Activated CD4-positive, alpha-beta memory T cell treated with anti-CD3 and anti-CD28 coated beads for 36 hours (primary cell): ENCODE measurements at regions of chr2 and their contacts with region 1.

Region 1: DNA sequence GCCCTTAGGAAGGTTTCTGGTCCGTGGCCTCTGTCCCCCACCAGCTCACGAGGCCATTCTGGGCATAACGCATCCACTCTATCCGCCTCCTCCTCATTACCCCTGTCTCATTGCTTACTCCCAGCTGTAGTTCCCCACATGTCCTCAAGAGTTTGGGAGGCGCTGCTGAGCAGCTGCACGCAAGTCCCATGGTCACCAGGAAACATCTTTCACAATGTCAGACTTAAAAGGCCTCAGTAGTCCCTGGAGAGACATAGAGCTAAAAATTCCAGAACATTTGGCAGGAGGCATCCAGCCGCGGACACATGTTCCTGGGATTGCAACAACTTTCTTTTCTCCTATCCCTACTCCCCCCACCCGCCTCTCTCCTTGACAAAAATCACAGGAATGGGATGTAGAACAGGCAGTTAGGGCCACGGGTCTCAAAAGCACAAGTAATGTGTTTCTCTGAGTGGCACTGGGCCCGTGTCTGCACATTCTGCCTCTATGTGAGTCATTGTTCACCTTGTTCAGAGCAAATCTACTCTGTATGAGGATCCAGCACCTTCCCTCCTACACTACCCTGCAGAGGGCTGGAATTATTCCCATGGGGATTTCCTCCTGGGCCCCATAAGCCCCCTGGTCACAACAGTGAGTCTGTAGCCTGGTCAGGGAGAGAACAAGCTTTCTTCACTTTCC is 8.1 kb downstream of the LBH start:
- DNase-seq: peak; percentile 87
- H3K4me3 Mint-ChIP-seq: peak overlapping the region; percentile 54
- H3K27ac Mint-ChIP-seq: peak overlapping the region; percentile 86
- H3K4me1 Mint-ChIP-seq: peaks cover 93% of the 10 kb centered on the region
- H3K27me3 Mint-ChIP-seq: no peaks in the 10 kb centered on the region

Region 2: DNA sequence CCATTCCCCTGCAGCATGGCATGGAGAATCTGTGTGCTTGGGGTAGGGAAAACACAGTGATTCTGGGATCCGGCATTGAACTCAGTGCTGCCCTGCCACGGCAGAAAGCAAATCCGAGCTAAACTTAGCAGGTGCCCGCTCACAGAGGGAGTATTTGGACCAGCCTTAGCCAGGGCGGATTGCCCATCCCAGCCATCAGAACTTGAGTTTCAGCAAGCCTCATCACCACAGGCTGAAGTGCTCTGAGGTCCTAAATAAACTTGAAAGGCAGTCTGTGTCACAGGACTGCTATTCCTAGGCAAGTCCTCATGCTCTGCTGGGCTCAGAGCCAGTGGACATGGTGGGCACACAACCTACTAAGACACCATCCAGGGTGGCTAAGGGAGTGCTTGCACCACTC is 178.9 kb before region 1 on chr2:
- CTCF ChIA-PET with region 1: no interaction called
- POLR2A ChIA-PET with region 1: no interaction called
- intact Hi-C with region 1: no loop called
- DNase-seq: no peak
- H3K4me3 Mint-ChIP-seq: no peak overlapping the region
- H3K27ac Mint-ChIP-seq: no peak overlapping the region
- H3K4me1 Mint-ChIP-seq: no peaks in the 10 kb centered on the region
- H3K27me3 Mint-ChIP-seq: peaks cover 18% of the 10 kb centered on the region

Region 3: DNA sequence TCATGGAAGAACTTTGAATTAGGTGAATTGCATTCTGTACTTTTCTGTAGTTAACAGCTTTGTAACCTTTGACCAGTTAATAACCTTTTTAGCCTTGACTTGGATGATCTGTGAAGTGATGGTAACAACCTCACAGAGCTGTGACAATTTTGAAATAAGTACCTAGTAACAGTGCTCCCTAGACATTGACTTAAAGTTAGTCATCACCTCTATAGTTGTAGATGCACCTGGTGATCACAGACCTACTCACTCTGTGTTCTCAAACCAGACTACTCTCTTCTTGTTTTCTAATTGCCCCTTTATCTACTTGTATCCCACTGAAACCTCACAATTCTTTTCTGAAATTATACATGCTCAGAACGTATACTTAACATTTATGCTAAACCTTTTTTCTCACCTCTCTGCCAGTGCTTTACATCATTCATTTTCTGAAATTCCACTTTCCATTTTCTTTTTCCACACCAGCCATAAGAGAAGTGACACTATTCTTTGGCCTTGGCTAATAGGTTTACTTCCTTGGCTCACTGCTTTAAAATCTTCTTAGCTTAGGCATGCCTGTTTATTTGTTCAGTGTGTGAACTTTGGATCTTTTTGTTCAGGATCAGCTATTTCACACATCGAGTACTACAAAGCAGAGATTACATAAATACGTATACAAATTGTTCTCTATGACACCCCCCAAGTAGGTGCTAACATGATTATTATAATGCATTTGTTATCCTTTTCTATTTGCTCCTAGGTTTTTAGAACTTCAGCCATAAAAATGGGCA is 83.4 kb before region 1 on chr2:
- CTCF ChIA-PET with region 1: no interaction called
- POLR2A ChIA-PET with region 1: no interaction called
- intact Hi-C with region 1: no loop called
- DNase-seq: no peak
- H3K4me3 Mint-ChIP-seq: no peak overlapping the region
- H3K27ac Mint-ChIP-seq: peak overlapping the region; percentile 59
- H3K4me1 Mint-ChIP-seq: peaks cover 51% of the 10 kb centered on the region
- H3K27me3 Mint-ChIP-seq: no peaks in the 10 kb centered on the region

Region 4: GRCh38 chr2:30225131-30225762 is 14.2 kb before region 1 on chr2:
- CTCF ChIA-PET with region 1: interaction called, 79 read pairs
- POLR2A ChIA-PET with region 1: interaction called, 33 read pairs
- intact Hi-C with region 1: loop called (anchors 1 kb)
- DNase-seq: peak; percentile 62
- H3K4me3 Mint-ChIP-seq: peak overlapping the region; percentile 83
- H3K27ac Mint-ChIP-seq: peak overlapping the region; percentile 97
- H3K4me1 Mint-ChIP-seq: peaks cover 70% of the 10 kb centered on the region
- H3K27me3 Mint-ChIP-seq: no peaks in the 10 kb centered on the region

Region 5: DNA sequence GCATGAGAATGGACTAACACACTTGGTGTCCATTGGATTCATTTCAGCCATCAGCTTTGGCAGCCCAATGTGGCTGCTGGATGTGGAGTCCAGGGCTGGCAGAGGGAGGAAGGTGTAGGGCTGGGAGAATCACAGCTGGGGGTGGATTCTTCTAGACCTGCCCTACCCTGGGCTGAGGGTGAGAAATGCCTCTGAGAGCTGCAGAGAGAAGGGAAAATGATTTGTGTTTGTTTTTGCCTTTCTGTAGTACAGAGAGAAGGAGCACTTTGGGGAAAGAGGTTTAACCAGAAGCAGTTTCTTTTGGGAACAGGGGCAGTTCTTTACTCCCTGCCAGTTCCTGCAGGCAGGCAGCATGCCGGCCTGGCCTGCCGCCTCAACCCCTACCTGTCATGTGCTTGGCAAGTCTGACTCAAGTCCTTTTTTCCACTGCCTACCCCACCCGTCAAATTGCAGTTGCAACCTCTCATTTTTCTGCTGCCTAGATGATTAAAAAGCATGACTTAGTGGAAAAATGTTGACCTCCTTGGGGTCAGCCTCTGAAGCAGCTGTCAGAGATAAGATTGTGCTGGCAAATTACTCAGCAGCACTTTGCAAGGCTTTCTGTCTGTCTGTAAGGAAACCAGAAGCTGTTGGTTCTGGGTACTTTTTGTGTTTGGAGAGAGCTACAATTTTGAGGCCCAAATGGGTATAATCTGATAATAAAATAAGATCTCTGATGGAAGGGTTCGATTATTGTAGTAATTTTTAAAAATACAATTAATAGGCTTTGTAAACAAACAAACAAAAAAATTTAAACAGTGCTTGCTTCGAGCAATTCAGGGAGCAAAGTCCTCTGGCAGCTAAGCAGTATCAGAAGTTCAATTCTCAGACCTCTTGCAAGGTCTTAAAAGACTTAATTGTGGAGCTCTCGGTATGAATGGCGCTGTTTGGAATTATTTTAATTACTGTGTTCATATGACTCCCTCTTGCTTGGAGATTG is 13.6 kb after region 1 on chr2:
- CTCF ChIA-PET with region 1: interaction called, 103 read pairs
- POLR2A ChIA-PET with region 1: interaction called, 19 read pairs
- intact Hi-C with region 1: loop called (anchors 1 kb)
- DNase-seq: peak; percentile 89
- H3K4me3 Mint-ChIP-seq: peak overlapping the region; percentile 33
- H3K27ac Mint-ChIP-seq: peak overlapping the region; percentile 92
- H3K4me1 Mint-ChIP-seq: peaks cover 96% of the 10 kb centered on the region
- H3K27me3 Mint-ChIP-seq: no peaks in the 10 kb centered on the region

Region 6: DNA sequence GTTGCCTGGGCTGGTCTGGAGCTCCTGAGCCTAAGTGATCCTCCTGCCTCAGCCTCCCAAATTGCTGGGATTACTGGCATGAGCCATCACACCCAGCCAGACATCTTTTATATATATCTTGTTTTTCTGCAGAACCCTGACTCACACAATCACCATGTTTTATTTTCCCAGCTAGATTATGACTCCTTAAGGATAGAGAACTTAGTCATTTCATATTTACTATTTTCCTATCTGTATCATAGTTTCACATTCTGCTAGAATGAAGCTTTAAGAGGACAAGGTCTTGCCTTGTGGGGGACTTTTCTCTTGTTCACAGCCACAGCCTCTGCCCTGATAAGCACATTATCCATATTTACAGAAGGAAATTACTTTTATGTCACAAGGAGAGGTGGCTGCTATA is 65.8 kb after region 1 on chr2:
- CTCF ChIA-PET with region 1: interaction called, 10 read pairs
- POLR2A ChIA-PET with region 1: interaction called, 3 read pairs
- intact Hi-C with region 1: no loop called
- DNase-seq: peak; percentile 23
- H3K4me3 Mint-ChIP-seq: no peak overlapping the region
- H3K27ac Mint-ChIP-seq: peak overlapping the region; percentile 73
- H3K4me1 Mint-ChIP-seq: peaks cover 24% of the 10 kb centered on the region
- H3K27me3 Mint-ChIP-seq: no peaks in the 10 kb centered on the region

Region 7: GRCh38 chr2:30447149-30448045 is 207.9 kb after region 1 on chr2 and contains the start of gene LCLAT1:
- CTCF ChIA-PET with region 1: interaction called, 4 read pairs
- POLR2A ChIA-PET with region 1: interaction called, 10 read pairs
- intact Hi-C with region 1: loop called (anchors 2 kb)
- DNase-seq: peak; percentile 90
- H3K4me3 Mint-ChIP-seq: peak within 1 kb of the TSS; percentile 88
- H3K27ac Mint-ChIP-seq: peak within 1 kb of the TSS; percentile 95
- H3K4me1 Mint-ChIP-seq: peaks cover 24% of the 10 kb centered on the region
- H3K27me3 Mint-ChIP-seq: no peaks in the 10 kb centered on the region
- total RNA-seq, gene LCLAT1: 21.5 to 24.3 TPM